Naive thymus-derived CD4-positive, alpha-beta T cell (primary cell): ENCODE measurements at regions of chr7 and their contacts with region 1.

Region 1: DNA sequence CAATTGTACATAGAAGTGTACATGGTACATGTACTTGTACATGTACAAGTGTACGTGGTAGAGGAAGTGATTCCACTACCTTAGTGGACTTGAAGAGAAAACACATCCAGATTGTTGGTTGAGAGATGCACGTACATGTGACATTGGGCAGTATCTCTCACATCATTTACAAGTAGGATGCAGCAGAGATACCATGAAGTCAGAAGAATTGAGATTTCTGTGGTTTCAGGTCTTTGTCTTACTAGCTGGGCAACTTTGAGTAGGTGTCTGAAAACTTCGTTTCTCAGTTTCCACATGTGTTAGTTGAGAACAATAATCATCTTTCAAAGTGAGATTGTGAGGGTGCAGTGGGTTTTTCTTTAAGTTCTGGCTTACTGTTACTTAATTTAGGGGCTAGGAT is 21.5 kb downstream of the CLDN12 start:
- DNase-seq: no peak
- ATAC-seq: no peak
- H3K4me3 ChIP-seq: no peak overlapping the region
- H3K4me3 Mint-ChIP-seq: peak overlapping the region in 1 of 10 donors; percentile 23
- H3K27ac ChIP-seq: no peak overlapping the region
- H3K27ac Mint-ChIP-seq: peak overlapping the region in 2 of 9 donors; percentile 26 to 60
- H3K4me1 ChIP-seq: no peaks in the 10 kb centered on the region
- H3K4me1 Mint-ChIP-seq: peaks cover 0 to 16% (median 0%) of the 10 kb centered on the region in 7 donors
- H3K27me3 ChIP-seq: no peaks in the 10 kb centered on the region
- H3K27me3 Mint-ChIP-seq: peaks cover 0 to 11% (median 7%) of the 10 kb centered on the region in 5 donors

Region 2: GRCh38 chr7:88789480-88790064 is 1635.1 kb before region 1 on chr7:
- CTCF ChIA-PET with region 1: interaction called, 4 read pairs
- POLR2A ChIA-PET with region 1: no interaction called
- intact Hi-C with region 1: loop called in 1 of 2 experiments (anchors 2 kb)
- DNase-seq: peak in 6 of 9 donors; percentile 1 to 42 (median 33)
- ATAC-seq: no peak
- H3K4me3 ChIP-seq: no peak overlapping the region
- H3K4me3 Mint-ChIP-seq: no peak overlapping the region
- H3K27ac ChIP-seq: no peak overlapping the region
- H3K27ac Mint-ChIP-seq: no peak overlapping the region
- H3K4me1 ChIP-seq: no peaks in the 10 kb centered on the region
- H3K4me1 Mint-ChIP-seq: no peaks in the 10 kb centered on the region
- H3K27me3 ChIP-seq: no peaks in the 10 kb centered on the region
- H3K27me3 Mint-ChIP-seq: no peaks in the 10 kb centered on the region

Region 3: DNA sequence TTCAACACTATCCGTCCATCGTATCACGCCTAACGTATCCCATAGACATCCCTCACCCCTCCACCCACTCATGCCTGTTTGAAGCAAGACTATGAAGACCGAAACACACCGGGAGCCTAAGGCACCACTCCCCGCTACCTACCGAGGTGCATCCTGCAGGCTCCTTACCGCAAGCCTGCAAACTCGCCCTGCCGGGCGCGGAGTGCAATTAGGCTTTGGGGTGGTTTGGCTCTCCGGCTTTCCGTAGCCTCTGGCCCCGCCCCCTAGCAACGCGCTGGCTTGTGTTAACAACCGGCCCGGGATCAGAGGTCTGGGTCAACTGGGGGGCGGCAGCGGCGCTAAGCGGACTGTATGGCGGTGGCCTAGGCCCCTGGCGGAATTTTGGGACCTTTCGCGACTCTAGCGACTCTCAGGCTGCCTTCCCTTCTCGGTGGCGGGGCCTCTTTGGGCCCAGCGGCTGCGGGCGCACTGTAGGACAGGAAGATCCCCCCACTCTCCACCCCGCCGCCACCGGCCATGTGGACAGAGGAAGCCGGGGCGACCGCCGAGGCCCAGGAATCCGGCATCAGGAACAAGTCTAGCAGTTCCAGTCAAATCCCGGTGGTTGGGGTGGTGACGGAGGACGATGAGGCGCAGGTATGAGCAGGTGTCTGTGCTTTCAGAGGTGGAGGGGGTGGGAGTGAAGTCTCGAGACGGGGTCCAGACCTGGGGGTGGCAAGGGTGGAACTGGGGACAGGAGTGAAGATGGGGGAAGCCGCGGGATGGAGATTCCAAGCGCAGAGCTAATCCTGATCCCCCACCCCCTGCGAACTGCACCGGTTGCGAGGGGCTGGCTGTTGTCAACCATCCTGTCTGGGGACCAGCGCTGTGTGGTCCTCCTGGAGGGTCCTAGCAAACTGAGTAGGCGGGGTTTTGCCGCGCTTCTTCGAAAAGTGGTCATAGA is 179.5 kb before region 1 on chr7 and contains the start of gene CFAP69:
- CTCF ChIA-PET with region 1: no interaction called
- POLR2A ChIA-PET with region 1: no interaction called
- intact Hi-C with region 1: loop called (anchors 5 kb)
- DNase-seq: peak; percentile 79 to 88 (median 84)
- ATAC-seq: peak; percentile 95
- H3K4me3 ChIP-seq: peak within 1 kb of the TSS; percentile 70
- H3K4me3 Mint-ChIP-seq: peak within 1 kb of the TSS; percentile 88 to 97 (median 92)
- H3K27ac ChIP-seq: peak within 1 kb of the TSS; percentile 50
- H3K27ac Mint-ChIP-seq: peak within 1 kb of the TSS in 8 of 9 donors; percentile 19 to 90 (median 78)
- H3K4me1 ChIP-seq: peaks cover 6 to 8% of the 10 kb centered on the region in 2 donors
- H3K4me1 Mint-ChIP-seq: peaks cover 8 to 27% (median 15%) of the 10 kb centered on the region in 7 donors
- H3K27me3 ChIP-seq: no peaks in the 10 kb centered on the region
- H3K27me3 Mint-ChIP-seq: peaks cover 11 to 59% (median 28%) of the 10 kb centered on the region in 5 donors
- total RNA-seq, gene CFAP69: 0.30 to 0.80 TPM in 2 of 5 experiments, not detected in the others

Region 4: DNA sequence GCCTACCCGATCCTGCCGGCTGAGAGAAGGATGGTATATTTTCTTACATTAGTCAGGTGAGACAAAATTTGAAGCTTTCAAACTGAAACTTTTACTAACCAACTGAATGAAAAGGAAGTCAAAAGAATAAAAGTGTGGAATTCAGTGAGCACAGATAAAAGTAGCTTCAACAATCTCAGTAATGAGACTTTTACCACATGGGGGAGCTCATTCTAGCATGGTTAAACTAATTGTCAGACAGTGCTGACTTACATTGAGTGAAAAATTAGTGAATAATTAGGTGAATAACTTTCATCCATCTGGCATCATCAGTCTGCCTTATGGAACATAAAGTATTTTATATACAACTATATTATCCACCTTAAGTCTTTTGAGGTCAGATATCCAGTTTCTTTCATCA is 112.0 kb before region 1 on chr7:
- CTCF ChIA-PET with region 1: interaction called, 5 read pairs
- POLR2A ChIA-PET with region 1: no interaction called
- intact Hi-C with region 1: loop called (anchors 1 to 2 kb)
- DNase-seq: peak in 3 of 9 donors; percentile 7 to 13 (median 10)
- ATAC-seq: no peak
- H3K4me3 ChIP-seq: no peak overlapping the region
- H3K4me3 Mint-ChIP-seq: no peak overlapping the region
- H3K27ac ChIP-seq: no peak overlapping the region
- H3K27ac Mint-ChIP-seq: peak overlapping the region in 1 of 9 donors; percentile 20
- H3K4me1 ChIP-seq: no peaks in the 10 kb centered on the region
- H3K4me1 Mint-ChIP-seq: no peaks in the 10 kb centered on the region
- H3K27me3 ChIP-seq: peaks cover 0 to 5% of the 10 kb centered on the region in 2 donors
- H3K27me3 Mint-ChIP-seq: peaks cover 21 to 46% (median 25%) of the 10 kb centered on the region in 5 donors

Region 5: DNA sequence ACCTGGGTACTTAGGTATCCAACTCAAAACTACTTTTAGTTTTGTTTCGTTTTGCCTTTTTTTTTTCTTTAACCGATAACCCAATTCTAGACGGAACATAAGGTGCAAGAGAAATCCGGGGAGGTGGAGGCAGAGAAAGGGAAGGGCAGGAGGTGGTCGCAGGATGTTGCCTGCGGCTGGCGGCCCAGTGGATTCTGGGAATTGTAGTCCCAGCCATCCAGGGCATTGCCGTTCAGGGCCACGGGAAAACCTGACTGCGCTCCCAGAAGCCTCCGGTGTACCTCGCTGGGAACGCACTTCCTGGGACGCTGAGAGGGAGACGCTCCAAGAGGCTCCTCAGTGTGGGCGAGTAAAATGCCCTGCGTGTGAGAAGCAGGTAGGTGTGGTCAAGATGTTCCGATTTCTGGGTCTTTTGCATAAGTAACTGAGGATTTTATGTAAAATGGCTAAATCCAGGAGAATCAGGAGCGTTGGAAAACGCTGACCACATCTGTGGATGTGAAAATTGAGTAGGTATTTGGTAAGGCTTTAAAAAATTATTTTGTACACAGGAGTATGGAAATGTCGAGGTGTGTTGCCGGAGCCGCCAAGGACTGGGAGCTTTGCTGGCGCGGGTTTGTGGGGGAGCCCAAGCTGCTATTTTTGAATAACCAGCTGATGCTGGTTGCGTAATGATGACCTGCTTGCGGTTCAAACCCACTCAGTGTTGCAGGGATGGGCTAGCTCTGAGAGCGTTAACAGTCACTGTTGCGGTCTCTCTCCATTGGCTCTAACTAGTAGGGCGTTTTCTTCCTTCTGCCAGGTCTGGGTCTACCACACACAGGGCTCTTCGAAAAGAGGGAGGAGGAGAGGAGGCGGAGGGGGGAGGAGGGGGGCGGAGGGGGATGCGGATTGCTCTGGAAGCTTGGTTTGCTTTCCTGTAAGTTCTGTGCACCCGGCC is 21.3 kb before region 1 on chr7 and contains the start of gene CLDN12:
- CTCF ChIA-PET with region 1: interaction called, 4 read pairs
- POLR2A ChIA-PET with region 1: no interaction called
- intact Hi-C with region 1: loop called in 1 of 2 experiments (anchors 2 kb)
- DNase-seq: peak; percentile 30 to 91 (median 75)
- ATAC-seq: peak; percentile 99
- H3K4me3 ChIP-seq: peak within 1 kb of the TSS; percentile 81
- H3K4me3 Mint-ChIP-seq: peak within 1 kb of the TSS; percentile 90 to 98 (median 94)
- H3K27ac ChIP-seq: peak within 1 kb of the TSS; percentile 73
- H3K27ac Mint-ChIP-seq: peak within 1 kb of the TSS; percentile 62 to 96 (median 94)
- H3K4me1 ChIP-seq: peaks cover 0 to 6% of the 10 kb centered on the region in 2 donors
- H3K4me1 Mint-ChIP-seq: peaks cover 0 to 24% (median 18%) of the 10 kb centered on the region in 7 donors
- H3K27me3 ChIP-seq: no peaks in the 10 kb centered on the region
- H3K27me3 Mint-ChIP-seq: peaks cover 0 to 18% (median 0%) of the 10 kb centered on the region in 5 donors
- total RNA-seq, gene CLDN12: 0.76 to 3.9 (median 2.0) TPM